PC-3 (cell line): ENCODE measurements at regions of chr2 and their contacts with region 1.

Region 1: DNA sequence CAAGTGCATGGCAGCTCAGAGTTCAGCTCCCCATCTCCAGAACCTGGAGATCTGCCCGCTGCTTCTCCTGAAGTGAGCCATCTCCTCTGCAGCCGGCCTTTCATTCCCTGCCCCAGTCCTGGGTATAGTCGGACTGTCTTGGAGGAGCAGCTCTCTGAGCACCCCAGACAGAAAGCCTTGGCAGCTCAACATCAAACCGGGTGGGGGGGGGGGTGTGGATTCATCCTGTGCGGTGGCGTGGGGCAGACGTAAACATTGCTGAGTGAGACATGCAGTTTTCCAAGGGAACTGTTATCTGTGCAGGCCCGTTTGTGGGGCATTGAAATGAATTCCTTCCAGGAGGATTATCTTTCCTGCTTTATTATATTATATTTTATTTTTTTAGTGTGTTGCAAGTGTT is 125.9 kb upstream of the MYCN start:
- DNase-seq: no peak
- ATAC-seq: no peak
- H3K4me3 ChIP-seq: no peak overlapping the region
- H3K27ac ChIP-seq: no peak overlapping the region
- H3K4me1 ChIP-seq: no peaks in the 10 kb centered on the region
- H3K27me3 ChIP-seq: peaks cover 72% of the 10 kb centered on the region
- CTCF ChIP-seq: no peak

Region 2: GRCh38 chr2:15799432-15799827 is 15.0 kb before region 1 on chr2:
- CTCF ChIA-PET with region 1: interaction called, 11 read pairs
- POLR2A ChIA-PET with region 1: no interaction called
- intact Hi-C with region 1: no loop called
- DNase-seq: no peak
- ATAC-seq: no peak
- H3K4me3 ChIP-seq: no peak overlapping the region
- H3K27ac ChIP-seq: no peak overlapping the region
- H3K4me1 ChIP-seq: no peaks in the 10 kb centered on the region
- H3K27me3 ChIP-seq: peaks cover 55% of the 10 kb centered on the region
- CTCF ChIP-seq: no peak